WTC11 (cell line): ENCODE measurements at regions of chr15 and their contacts with region 1.

Region 1: DNA sequence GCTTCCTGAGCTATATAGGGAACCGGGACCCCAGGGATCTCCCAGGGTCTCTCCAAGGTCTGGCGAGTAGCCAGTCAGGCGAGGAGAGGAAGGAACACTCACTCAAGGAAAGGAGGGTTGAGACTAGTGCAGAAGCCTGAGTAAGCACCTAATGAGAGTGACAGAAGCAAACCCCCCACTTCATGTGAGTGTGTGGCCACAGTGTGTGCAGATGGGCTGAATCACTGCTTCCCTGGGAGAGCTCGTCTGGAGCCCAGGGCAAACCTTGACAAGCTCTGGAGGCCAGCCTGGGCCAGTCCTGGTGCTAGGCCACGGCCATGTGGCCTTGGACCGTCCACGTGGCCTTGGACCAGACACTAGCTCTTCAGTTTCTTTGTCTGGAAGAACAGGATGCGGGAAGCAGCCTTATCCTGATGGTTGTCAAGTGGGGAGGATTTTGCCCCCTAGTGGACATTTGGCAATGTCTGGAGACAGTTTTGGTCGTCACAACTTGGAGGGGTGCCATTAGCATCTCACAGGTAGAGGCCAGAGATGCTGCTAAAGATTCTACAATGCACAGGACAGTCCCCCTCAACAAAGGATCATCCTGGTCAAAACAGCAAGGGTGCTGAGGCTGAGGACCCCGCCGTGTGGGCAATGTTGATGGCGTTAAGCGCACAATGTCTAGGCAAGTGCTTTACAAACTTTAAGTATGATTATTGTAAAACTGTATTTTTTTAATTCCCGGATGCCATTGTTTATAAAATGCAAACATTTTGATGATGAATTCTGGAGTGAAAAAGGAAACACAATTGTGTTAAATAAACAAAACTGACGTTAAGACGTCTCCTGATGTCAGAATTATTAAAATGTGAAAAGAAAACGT is 34.8 kb upstream of the CTSH start:
- DNase-seq: peak; percentile 71
- ATAC-seq: peak; percentile 90
- H3K4me3 Mint-ChIP-seq: no peak overlapping the region
- H3K27ac Mint-ChIP-seq: no peak overlapping the region
- H3K4me1 Mint-ChIP-seq: peaks cover 11% of the 10 kb centered on the region
- H3K27me3 Mint-ChIP-seq: peaks cover 16% of the 10 kb centered on the region
- CTCF ChIP-seq: peak; percentile 78

Region 2: DNA sequence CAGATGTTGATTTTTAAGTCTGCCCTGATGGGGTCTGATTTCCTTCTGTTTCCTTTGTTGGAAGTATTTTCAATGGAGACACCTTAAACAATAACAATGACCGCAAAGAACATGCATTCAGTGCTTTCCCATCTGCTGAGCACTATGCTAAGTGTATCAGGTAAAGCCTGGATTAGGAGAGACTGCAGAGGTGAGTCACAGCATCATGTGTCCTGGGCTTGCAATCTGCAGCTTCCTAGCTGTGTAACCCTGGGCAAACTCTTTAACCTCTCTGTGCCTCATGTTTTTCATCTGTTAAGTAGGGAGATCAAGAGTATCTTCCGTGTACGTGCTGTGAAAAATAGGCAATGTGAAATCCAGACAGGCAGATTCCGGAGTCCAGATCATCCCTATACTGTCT is 325.4 kb before region 1 on chr15:
- CTCF ChIA-PET with region 1: no interaction called
- POLR2A ChIA-PET with region 1: no interaction called
- DNase-seq: no peak
- ATAC-seq: no peak
- H3K4me3 Mint-ChIP-seq: no peak overlapping the region
- H3K27ac Mint-ChIP-seq: no peak overlapping the region
- H3K4me1 Mint-ChIP-seq: no peaks in the 10 kb centered on the region
- H3K27me3 Mint-ChIP-seq: peaks cover 8% of the 10 kb centered on the region; the same call in 1 of the 2 replicates
- CTCF ChIP-seq: no peak

Region 3: GRCh38 chr15:78909791-78910228 is 69.9 kb before region 1 on chr15:
- CTCF ChIA-PET with region 1: interaction called, 87 read pairs
- POLR2A ChIA-PET with region 1: no interaction called
- DNase-seq: peak; percentile 65
- ATAC-seq: peak; percentile 79
- H3K4me3 Mint-ChIP-seq: no peak overlapping the region
- H3K27ac Mint-ChIP-seq: peak overlapping the region; percentile 89
- H3K4me1 Mint-ChIP-seq: peaks cover 26% of the 10 kb centered on the region
- H3K27me3 Mint-ChIP-seq: no peaks in the 10 kb centered on the region
- CTCF ChIP-seq: peak; percentile 70

Region 4: DNA sequence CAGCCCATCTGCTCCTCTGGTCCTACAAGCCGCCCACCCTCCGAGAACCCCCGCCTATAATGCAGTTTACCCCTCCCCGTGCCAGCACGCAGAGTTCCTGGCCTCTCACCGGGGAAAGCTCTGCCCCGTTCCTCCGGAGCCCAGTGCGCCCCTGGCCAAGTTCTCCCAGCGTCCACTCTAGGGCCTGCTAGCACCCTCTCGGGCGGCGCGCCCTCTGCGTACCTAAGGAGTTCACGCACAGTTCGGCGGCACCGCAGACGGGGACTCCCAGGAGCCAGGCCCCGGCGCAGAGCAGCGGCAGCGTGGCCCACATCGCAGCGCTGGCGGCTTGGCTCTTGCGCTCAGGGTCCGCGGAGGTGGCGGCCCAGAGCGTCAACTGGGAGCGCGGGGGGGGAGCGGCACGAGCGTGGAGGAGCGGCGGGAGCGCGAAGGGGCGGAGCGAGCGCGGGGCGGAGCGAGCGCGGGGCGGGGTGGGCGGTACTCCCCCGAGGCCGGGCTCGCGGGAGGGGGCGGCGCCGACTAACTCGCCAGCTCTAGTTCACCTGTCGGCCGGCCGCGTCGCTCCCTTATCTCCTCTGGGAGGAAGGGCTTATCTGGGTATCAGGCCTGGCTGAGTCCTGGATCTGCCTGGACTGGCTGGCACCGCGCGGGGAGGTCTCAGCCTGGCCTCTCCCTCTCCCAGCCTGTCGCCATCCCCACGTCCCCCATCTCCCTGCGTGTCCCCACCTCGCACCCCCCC is 34.9 kb before region 1 on chr15 and contains the start of gene CTSH:
- CTCF ChIA-PET with region 1: interaction called, 23 read pairs
- POLR2A ChIA-PET with region 1: no interaction called
- DNase-seq: peak; percentile 90
- ATAC-seq: peak; percentile 94
- H3K4me3 Mint-ChIP-seq: peak within 1 kb of the TSS; percentile 70
- H3K27ac Mint-ChIP-seq: no peak within 1 kb of the TSS
- H3K4me1 Mint-ChIP-seq: peaks cover 8% of the 10 kb centered on the region
- H3K27me3 Mint-ChIP-seq: peaks cover 47% of the 10 kb centered on the region
- CTCF ChIP-seq: no peak
- total RNA-seq, gene CTSH: 20.4 to 31.8 TPM (median 31.1 TPM) in 3 replicates

Region 5: DNA sequence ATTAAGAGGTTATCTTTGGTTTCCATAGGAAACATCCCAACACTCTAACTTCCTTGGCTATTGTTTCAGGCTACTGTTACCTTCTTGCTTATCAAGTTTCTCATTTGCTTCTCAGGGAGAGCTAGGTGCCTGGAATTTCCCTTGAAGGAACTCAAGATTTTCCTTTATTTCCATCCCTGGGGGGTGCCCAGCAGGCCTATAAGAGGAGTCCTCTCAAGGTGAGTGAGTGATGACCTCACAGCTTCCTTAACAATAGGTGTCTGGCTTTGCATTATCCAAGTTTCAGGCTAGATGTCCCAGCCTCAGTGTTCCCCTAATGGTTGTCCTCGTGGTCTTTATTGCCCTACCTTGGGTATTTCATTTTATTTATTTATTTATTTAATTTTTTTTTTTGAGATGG is 22.8 kb before region 1 on chr15:
- CTCF ChIA-PET with region 1: interaction called, 12 read pairs
- POLR2A ChIA-PET with region 1: no interaction called
- DNase-seq: no peak
- ATAC-seq: no peak
- H3K4me3 Mint-ChIP-seq: no peak overlapping the region
- H3K27ac Mint-ChIP-seq: no peak overlapping the region
- H3K4me1 Mint-ChIP-seq: peaks cover 7% of the 10 kb centered on the region
- H3K27me3 Mint-ChIP-seq: no peaks in the 10 kb centered on the region
- CTCF ChIP-seq: no peak

Region 6: GRCh38 chr15:78996894-78997275 is 17.2 kb after region 1 on chr15:
- CTCF ChIA-PET with region 1: interaction called, 29 read pairs
- POLR2A ChIA-PET with region 1: no interaction called
- DNase-seq: no peak
- ATAC-seq: no peak
- H3K4me3 Mint-ChIP-seq: no peak overlapping the region
- H3K27ac Mint-ChIP-seq: no peak overlapping the region
- H3K4me1 Mint-ChIP-seq: peaks cover 9% of the 10 kb centered on the region
- H3K27me3 Mint-ChIP-seq: no peaks in the 10 kb centered on the region; the same call in 1 of the 2 replicates
- CTCF ChIP-seq: no peak